ENCODE measurements at regions of chr1 and their contacts with region 1.

Region 1: GRCh38 chr1:100921109-100921706 is 25.3 kb downstream of the SLC30A7 start:
- DNase-seq: no peak
- ATAC-seq: peak in 3 of 4 donors; percentile 70 to 75 (median 75)
- H3K4me3 ChIP-seq: no peak overlapping the region
- H3K27ac ChIP-seq: no peak overlapping the region
- H3K4me1 ChIP-seq: no peaks in the 10 kb centered on the region
- H3K27me3 ChIP-seq: no peaks in the 10 kb centered on the region
- CTCF ChIP-seq: peak; percentile 30 to 58 (median 48)

Region 2: GRCh38 chr1:101238681-101239094 is 317.5 kb after region 1 on chr1:
- intact Hi-C with region 1: loop called in 1 of 3 experiments (anchors 10 kb)
- DNase-seq: peak; percentile 50 to 93 (median 76)
- ATAC-seq: peak; percentile 77 to 87 (median 82)
- H3K4me3 ChIP-seq: no peak overlapping the region
- H3K27ac ChIP-seq: no peak overlapping the region
- H3K4me1 ChIP-seq: peaks cover 4 to 14% (median 8%) of the 10 kb centered on the region in 3 donors
- H3K27me3 ChIP-seq: peaks cover 0 to 34% (median 0%) of the 10 kb centered on the region in 4 donors
- CTCF ChIP-seq: peak; percentile 80 to 92 (median 88)

Region 3: DNA sequence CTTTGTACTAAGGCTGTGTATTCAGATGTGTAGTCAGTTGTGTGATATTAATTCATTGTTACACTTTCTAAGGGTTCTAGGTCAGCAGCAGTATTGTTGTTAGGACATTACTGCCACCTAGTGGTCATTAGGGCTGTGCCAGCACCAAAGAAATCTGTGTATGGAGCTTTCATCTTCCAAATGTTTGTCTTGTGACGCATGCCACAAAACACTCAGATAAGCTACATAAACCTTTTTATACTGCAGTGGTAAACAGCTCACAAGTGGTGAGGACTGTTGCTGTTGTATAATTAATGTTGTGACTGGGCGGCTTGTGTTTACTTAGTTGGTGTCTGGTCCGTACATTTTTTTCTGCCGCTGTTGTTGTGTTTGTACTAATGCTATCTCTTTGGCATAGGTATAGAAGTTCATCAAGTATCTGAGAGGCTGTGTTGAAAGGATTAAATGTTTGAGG is 367.3 kb after region 1 on chr1:
- intact Hi-C with region 1: loop called in 2 of 3 experiments (anchors 5 to 10 kb)
- DNase-seq: peak in 4 of 6 donors; percentile 38 to 75 (median 51)
- ATAC-seq: peak; percentile 88 to 98 (median 95)
- H3K4me3 ChIP-seq: no peak overlapping the region
- H3K27ac ChIP-seq: no peak overlapping the region
- H3K4me1 ChIP-seq: peaks cover 0 to 4% (median 0%) of the 10 kb centered on the region in 3 donors
- H3K27me3 ChIP-seq: no peaks in the 10 kb centered on the region
- CTCF ChIP-seq: peak; percentile 86 to 96 (median 92)